K562 (cell line): ENCODE measurements at regions of chr7 and their contacts with region 1.

Region 1: GRCh38 chr7:127897704-127898454 is 133.4 kb downstream of the LRRC4 start:
- DNase-seq: no peak
- ATAC-seq: no peak
- H3K4me3 ChIP-seq: no peak overlapping the region
- H3K27ac ChIP-seq: no peak overlapping the region
- H3K4me1 ChIP-seq: peaks cover 30 to 68% of the 10 kb centered on the region in 2 experiments
- H3K27me3 ChIP-seq: no peaks in the 10 kb centered on the region
- CTCF ChIP-seq: no peak
- EP300 ChIP-seq: no peak
- POLR2A ChIP-seq: no peak
- RAD21 ChIP-seq: no peak

Region 2: DNA sequence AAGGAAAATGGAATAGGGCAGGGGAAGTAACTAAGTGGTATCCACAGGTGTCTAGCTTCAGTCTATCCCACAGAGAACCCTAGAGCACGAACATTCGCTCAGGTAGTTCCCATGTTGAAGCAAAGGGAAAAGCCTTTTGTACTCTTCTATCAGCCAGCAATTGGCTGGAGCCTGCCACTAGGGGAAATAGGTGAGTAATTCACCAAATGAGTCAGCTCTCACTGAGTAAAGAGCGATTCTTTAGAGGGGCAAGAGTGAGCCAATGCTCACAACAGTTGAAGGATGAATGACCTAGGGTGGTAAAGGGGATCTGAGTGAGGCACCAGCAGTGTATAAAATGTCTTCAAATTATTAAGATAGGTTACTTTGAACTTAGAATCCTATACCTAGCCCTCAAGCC is 411.2 kb before region 1 on chr7:
- CTCF ChIA-PET with region 1: no interaction called
- POLR2A ChIA-PET with region 1: no interaction called
- in situ Hi-C with region 1: no loop called
- intact Hi-C with region 1: no loop called
- DNase-seq: peak in 1 of 4 experiments; percentile 11
- ATAC-seq: peak; percentile 74
- H3K4me3 ChIP-seq: no peak overlapping the region
- H3K27ac ChIP-seq: no peak overlapping the region
- H3K4me1 ChIP-seq: no peaks in the 10 kb centered on the region
- H3K27me3 ChIP-seq: no peaks in the 10 kb centered on the region
- CTCF ChIP-seq: 0 out of 6 replicates have a peak, but pooled peaks of 1 of the 3 experiments have one; percentile 14
- EP300 ChIP-seq: no peak
- POLR2A ChIP-seq: no peak
- RAD21 ChIP-seq: no peak

Region 3: GRCh38 chr7:127566242-127566641 is 331.6 kb before region 1 on chr7:
- CTCF ChIA-PET with region 1: no interaction called
- POLR2A ChIA-PET with region 1: no interaction called
- in situ Hi-C with region 1: no loop called
- intact Hi-C with region 1: no loop called
- DNase-seq: no peak
- ATAC-seq: no peak
- H3K4me3 ChIP-seq: no peak overlapping the region
- H3K27ac ChIP-seq: no peak overlapping the region
- H3K4me1 ChIP-seq: no peaks in the 10 kb centered on the region
- H3K27me3 ChIP-seq: no peaks in the 10 kb centered on the region
- CTCF ChIP-seq: no peak
- EP300 ChIP-seq: no peak
- POLR2A ChIP-seq: no peak
- RAD21 ChIP-seq: no peak

Region 4: DNA sequence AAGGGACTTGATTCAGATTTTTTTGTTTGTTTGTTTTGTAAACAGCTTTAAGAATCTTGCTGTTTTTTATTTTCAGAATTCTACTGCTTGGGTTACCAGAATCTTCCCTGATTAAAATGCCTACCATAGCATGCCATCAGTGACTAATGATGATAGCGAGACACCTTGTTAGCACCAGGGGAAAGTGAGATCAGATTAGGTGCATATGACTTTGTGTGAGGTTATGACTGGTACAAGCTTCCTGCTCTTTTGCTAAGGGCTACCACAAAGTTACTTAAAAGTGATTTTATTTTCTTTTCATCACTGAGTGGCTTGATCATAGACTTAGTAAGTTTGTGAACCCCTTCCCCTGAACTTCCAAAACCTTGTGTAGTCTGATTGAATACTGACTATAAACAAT is 152.4 kb before region 1 on chr7:
- CTCF ChIA-PET with region 1: no interaction called
- POLR2A ChIA-PET with region 1: no interaction called
- in situ Hi-C with region 1: no loop called
- intact Hi-C with region 1: no loop called
- DNase-seq: no peak
- ATAC-seq: no peak
- H3K4me3 ChIP-seq: no peak overlapping the region
- H3K27ac ChIP-seq: no peak overlapping the region
- H3K4me1 ChIP-seq: no peaks in the 10 kb centered on the region
- H3K27me3 ChIP-seq: no peaks in the 10 kb centered on the region
- CTCF ChIP-seq: no peak
- EP300 ChIP-seq: no peak
- POLR2A ChIP-seq: no peak
- RAD21 ChIP-seq: no peak

Region 5: DNA sequence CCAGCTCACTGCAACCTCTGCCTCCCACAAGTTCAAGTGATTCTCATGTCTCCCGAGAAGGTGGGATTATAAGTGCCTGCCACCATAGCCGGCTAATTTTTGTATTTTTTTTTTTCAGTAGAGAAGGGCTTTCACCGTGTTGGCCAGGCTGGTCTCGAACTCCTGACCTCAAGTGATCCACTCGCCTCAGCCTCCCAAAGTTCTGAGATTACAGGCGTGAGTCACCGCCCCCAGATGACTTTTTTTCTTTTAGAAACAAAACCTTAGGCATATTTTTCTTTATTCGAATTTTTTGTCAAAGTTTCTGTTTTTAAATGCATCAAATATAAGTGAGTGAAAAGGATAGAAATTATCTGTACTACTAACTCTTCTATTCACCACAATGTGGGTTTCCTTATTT is 20.3 kb after region 1 on chr7:
- CTCF ChIA-PET with region 1: no interaction called
- POLR2A ChIA-PET with region 1: interaction called, 10 read pairs
- in situ Hi-C with region 1: no loop called
- intact Hi-C with region 1: no loop called
- DNase-seq: peak in 1 of 4 experiments; percentile 28
- ATAC-seq: no peak; the same call in 2 of the 3 replicates
- H3K4me3 ChIP-seq: no peak overlapping the region
- H3K27ac ChIP-seq: no peak overlapping the region
- H3K4me1 ChIP-seq: no peaks in the 10 kb centered on the region; a peak in 2 of 5 replicates
- H3K27me3 ChIP-seq: no peaks in the 10 kb centered on the region
- CTCF ChIP-seq: no peak
- EP300 ChIP-seq: no peak
- POLR2A ChIP-seq: no peak
- RAD21 ChIP-seq: no peak